ENCODE measurements at regions of chr5 and their contacts with region 1.

Region 1: GRCh38 chr5:142881076-142881783 is 111.1 kb downstream of the ARHGAP26 start:
- DNase-seq: no peak
- H3K4me3 ChIP-seq: peak overlapping the region in 1 of 4 experiments; percentile 29; a peak in 1 of 8 replicates
- H3K27ac ChIP-seq: 0 out of 2 replicates have a peak overlapping the region, but pooled peaks have one; percentile 6
- H3K4me1 ChIP-seq: peaks cover 10 to 22% (median 15%) of the 10 kb centered on the region in 4 experiments
- H3K27me3 ChIP-seq: no peaks in the 10 kb centered on the region
- CTCF ChIP-seq: no peak
- EP300 ChIP-seq: no peak
- POLR2A ChIP-seq: no peak
- RAD21 ChIP-seq: no peak

Region 2: DNA sequence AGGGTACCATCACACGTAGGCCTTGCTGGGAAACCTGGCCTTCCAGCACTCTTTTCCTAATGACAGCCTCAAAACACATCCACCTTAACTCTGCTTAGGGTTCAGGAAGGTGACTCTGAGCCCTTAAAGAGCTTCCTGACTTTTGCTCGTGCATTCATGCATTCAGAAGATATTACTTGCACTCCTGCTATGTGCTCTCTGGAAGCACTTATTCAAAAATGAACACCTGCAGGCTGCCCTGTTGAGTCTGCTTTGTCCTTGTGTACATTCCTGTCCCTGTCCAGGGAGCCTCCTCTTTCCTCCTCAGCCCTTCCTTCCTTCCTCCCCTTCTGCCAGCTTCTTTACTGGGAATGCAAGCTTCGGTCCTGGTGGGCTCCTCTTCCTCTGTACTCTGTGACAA is 617.9 kb before region 1 on chr5:
- CTCF ChIA-PET with region 1: no interaction called
- POLR2A ChIA-PET with region 1: no interaction called
- DNase-seq: no peak
- H3K4me3 ChIP-seq: no peak overlapping the region
- H3K27ac ChIP-seq: no peak overlapping the region
- H3K4me1 ChIP-seq: peaks cover 0 to 9% (median 4%) of the 10 kb centered on the region in 4 experiments; a peak in 3 of 7 replicates
- H3K27me3 ChIP-seq: no peaks in the 10 kb centered on the region
- CTCF ChIP-seq: no peak
- EP300 ChIP-seq: no peak
- POLR2A ChIP-seq: no peak
- RAD21 ChIP-seq: no peak

Region 3: GRCh38 chr5:142769741-142770631 is 111.2 kb before region 1 on chr5 and contains the start of gene ARHGAP26:
- CTCF ChIA-PET with region 1: interaction called, 79 read pairs
- POLR2A ChIA-PET with region 1: interaction called, 16 read pairs
- DNase-seq: peak; percentile 93 to 94
- H3K4me3 ChIP-seq: peak within 1 kb of the TSS; percentile 77 to 91 (median 83)
- H3K27ac ChIP-seq: no peak within 1 kb of the TSS; the same call in 1 of the 2 replicates
- H3K4me1 ChIP-seq: peaks cover 0 to 10% (median 5%) of the 10 kb centered on the region in 4 experiments; a peak in 6 of 7 replicates
- H3K27me3 ChIP-seq: peaks cover 0 to 8% (median 2%) of the 10 kb centered on the region in 4 experiments; a peak in 4 of 7 replicates
- CTCF ChIP-seq: peak in 2 of 3 experiments; percentile 16 to 17; a peak in 3 of 4 replicates
- EP300 ChIP-seq: no peak
- POLR2A ChIP-seq: peak; percentile 85 to 87
- RAD21 ChIP-seq: peak; percentile 11 to 25; a peak in 2 of 4 replicates
- total RNA-seq, gene ARHGAP26: 20.6 and 24.8 TPM in 2 replicates

Region 4: DNA sequence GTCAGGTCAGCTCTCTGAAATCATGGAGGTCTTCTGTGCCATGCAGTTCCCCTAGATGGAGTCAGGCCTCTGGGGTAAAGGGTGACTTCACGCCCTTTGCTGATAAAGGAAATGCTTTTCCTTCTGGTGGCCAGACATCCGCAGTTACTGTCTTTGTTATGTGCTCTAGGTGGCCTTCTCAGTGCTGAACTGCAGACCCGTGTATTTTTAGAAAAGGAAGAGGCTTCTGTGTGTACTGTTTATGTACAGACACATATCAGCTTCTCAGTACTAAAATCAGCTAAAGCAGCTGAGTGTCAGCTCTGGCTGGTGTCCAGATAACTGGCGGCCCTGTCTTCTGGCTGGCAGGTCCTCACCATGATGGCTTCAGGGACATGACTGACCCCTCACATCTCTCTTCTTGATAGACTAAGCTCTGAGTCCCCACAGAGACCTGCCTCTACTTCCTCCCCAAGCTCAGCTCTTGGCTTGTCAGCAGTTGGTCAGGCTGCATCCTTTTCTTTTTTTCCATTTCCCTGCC is 35.8 kb before region 1 on chr5:
- CTCF ChIA-PET with region 1: interaction called, 13 read pairs
- POLR2A ChIA-PET with region 1: no interaction called
- DNase-seq: no peak
- H3K4me3 ChIP-seq: no peak overlapping the region
- H3K27ac ChIP-seq: no peak overlapping the region
- H3K4me1 ChIP-seq: peaks cover 0 to 14% (median 10%) of the 10 kb centered on the region in 4 experiments; a peak in 5 of 7 replicates
- H3K27me3 ChIP-seq: no peaks in the 10 kb centered on the region
- CTCF ChIP-seq: no peak
- EP300 ChIP-seq: no peak
- POLR2A ChIP-seq: no peak
- RAD21 ChIP-seq: no peak

Region 5: GRCh38 chr5:142860270-142860669 is 21.0 kb before region 1 on chr5:
- CTCF ChIA-PET with region 1: interaction called, 28 read pairs
- POLR2A ChIA-PET with region 1: no interaction called
- DNase-seq: no peak
- H3K4me3 ChIP-seq: no peak overlapping the region
- H3K27ac ChIP-seq: no peak overlapping the region
- H3K4me1 ChIP-seq: peaks cover 15 to 33% (median 20%) of the 10 kb centered on the region in 4 experiments
- H3K27me3 ChIP-seq: no peaks in the 10 kb centered on the region
- CTCF ChIP-seq: no peak
- EP300 ChIP-seq: no peak
- POLR2A ChIP-seq: no peak
- RAD21 ChIP-seq: no peak

Region 6: DNA sequence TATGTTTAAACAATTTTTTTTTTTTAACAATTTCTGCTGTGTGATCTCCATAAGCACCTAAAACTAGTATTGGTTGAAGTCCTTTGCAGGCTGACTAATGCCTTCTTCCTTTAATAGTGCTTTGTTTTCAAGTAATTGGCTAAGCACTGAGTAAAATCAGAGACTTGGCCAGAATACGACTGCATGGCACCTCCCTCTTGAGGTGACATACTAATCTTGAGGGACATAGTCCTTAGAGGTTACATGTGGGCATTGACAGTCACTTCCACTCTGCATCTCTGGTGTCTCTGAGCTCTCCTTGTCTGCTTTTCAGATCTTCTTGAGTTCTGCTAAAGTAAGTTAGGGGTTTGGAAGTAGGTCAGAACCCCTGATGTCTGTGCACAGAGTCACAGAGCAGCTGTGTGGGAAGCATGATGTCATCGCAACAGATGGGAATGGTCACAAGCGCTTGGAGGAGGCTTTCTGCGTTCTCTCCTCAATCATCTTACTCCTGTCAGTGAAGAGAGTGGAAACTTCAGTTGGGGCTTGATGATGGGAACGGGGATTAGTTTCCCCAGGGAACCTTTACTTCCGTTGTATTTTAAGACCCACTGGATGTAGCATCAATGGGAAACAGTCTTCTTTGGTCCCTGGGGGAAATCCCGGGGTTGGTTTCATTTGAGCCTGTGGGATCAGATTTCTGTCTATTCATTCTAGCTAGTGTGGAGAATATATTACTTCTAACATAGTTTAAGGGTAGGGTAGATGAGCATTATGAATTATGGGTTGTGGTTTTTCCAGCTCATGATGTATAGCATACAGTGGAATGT is 25.8 kb after region 1 on chr5:
- CTCF ChIA-PET with region 1: interaction called, 98 read pairs
- POLR2A ChIA-PET with region 1: no interaction called
- DNase-seq: no peak
- H3K4me3 ChIP-seq: no peak overlapping the region
- H3K27ac ChIP-seq: no peak overlapping the region
- H3K4me1 ChIP-seq: peaks cover 0 to 6% (median 3%) of the 10 kb centered on the region in 4 experiments; a peak in 3 of 7 replicates
- H3K27me3 ChIP-seq: no peaks in the 10 kb centered on the region
- CTCF ChIP-seq: no peak
- EP300 ChIP-seq: no peak
- POLR2A ChIP-seq: no peak
- RAD21 ChIP-seq: no peak

Region 7: GRCh38 chr5:142929587-142929986 is 48.4 kb after region 1 on chr5:
- CTCF ChIA-PET with region 1: interaction called, 14 read pairs
- POLR2A ChIA-PET with region 1: no interaction called
- DNase-seq: no peak
- H3K4me3 ChIP-seq: no peak overlapping the region
- H3K27ac ChIP-seq: no peak overlapping the region
- H3K4me1 ChIP-seq: peaks cover 0 to 3% (median 0%) of the 10 kb centered on the region in 4 experiments; a peak in 3 of 7 replicates
- H3K27me3 ChIP-seq: no peaks in the 10 kb centered on the region
- CTCF ChIP-seq: no peak
- EP300 ChIP-seq: no peak
- POLR2A ChIP-seq: no peak
- RAD21 ChIP-seq: no peak

Region 8: GRCh38 chr5:143016777-143017516 is 135.7 kb after region 1 on chr5:
- CTCF ChIA-PET with region 1: no interaction called
- POLR2A ChIA-PET with region 1: no interaction called
- DNase-seq: no peak
- H3K4me3 ChIP-seq: no peak overlapping the region
- H3K27ac ChIP-seq: no peak overlapping the region
- H3K4me1 ChIP-seq: peaks cover 2 to 12% (median 6%) of the 10 kb centered on the region in 4 experiments; a peak in 4 of 7 replicates
- H3K27me3 ChIP-seq: no peaks in the 10 kb centered on the region
- CTCF ChIP-seq: peak in 2 of 3 experiments; percentile 51 to 69; a peak in 3 of 4 replicates
- EP300 ChIP-seq: no peak
- POLR2A ChIP-seq: no peak
- RAD21 ChIP-seq: peak; percentile 69 to 75